Left colon (tissue), 2 donors: ENCODE measurements at regions of chr11 and their contacts with region 1.

Region 1: GRCh38 chr11:117107701-117108590 is 9.7 kb upstream of the SIK3 start:
- DNase-seq: no peak
- ATAC-seq: no peak

Region 2: DNA sequence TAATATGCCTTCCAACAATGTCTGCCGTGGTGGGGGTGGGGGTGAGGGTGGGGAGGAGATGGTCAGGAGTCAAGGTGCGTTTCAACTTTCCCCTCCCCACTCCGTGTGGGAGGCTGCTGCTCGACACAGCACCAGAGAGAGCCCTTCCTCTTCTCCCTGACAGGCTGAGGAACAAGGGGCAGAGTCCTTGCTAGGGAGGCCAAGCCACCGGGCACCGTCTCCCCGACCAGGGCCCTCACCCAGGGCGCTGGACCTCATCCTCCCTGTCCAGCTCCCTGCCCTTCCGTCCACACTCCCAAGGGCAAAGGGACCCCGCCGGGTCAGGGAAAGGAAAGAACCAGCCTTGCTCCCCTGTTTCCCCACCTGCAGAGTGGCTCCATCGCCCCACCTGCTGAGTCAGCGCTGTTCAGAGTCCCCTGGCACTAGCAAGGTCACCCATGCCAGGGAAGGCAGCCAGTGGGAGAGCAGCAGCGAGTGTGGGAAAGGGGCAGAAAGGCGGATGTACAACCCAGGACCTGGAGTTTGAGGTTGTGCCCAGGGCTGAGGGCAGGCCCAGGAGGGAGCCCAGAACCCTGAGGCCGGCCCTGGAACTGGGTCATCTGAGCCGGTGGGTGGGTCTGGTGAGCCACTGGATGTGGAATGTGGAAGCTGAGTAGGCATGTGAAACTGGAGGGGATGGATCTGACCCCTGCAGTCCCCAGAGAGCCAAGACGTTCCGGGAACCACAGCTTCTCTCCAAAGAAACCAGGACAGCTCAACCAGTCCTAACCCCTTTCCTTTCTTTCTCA is 382.3 kb before region 1 on chr11:
- intact Hi-C with region 1: no loop called
- DNase-seq: no peak
- ATAC-seq: no peak

Region 3: DNA sequence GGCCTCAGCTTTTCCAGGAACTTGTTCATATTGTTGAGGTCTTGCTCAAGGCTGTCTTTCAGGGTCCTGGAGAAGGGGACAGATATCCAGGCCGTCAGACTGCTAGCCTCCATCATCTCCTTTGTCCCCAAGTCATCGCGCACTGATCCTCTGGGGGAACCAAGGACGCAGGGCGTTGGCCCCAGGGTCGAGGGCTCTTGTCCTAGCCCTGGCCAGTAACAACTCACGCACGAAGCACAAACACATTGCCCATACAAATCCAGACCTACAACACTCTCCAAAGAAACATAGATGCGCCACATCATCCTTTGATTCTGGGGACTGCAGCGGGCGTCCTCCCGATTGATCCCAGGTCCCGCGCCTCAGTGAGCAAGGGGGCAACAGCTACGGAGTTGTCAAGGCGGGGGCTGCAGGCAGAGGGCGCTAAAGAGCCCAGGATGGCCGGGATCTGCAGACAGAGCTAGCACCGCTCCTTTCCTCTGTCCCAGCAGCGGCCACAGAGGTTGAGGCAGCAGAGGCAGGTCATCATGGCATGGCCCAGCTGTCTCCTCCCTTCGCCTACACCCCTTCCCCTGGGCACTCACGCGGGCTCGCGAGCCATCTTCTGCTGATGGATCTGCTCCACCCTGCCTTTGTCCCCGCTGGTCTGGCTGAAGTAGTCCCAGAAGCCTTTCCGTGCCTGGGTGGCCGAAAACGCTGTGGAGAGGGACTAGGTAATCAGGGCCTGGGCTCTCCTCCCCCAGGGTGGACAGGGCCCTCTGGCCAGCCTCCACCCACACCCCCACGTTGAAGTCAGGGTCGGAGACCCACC is 316.7 kb before region 1 on chr11:
- intact Hi-C with region 1: loop called (anchors 5 to 10 kb)
- DNase-seq: peak; percentile 58 to 82
- ATAC-seq: peak; percentile 51

Region 4: GRCh38 chr11:116879800-116880625 is 227.9 kb before region 1 on chr11:
- intact Hi-C with region 1: loop called (anchors 2 to 10 kb)
- DNase-seq: no peak
- ATAC-seq: peak; percentile 89